ENCODE measurements at regions of chr2 and their contacts with region 1.

Region 1: GRCh38 chr2:206989306-206989705 is 50.0 kb downstream of the CPO start:
- DNase-seq: peak; percentile 58
- CTCF ChIP-seq: peak; percentile 68

Region 2: DNA sequence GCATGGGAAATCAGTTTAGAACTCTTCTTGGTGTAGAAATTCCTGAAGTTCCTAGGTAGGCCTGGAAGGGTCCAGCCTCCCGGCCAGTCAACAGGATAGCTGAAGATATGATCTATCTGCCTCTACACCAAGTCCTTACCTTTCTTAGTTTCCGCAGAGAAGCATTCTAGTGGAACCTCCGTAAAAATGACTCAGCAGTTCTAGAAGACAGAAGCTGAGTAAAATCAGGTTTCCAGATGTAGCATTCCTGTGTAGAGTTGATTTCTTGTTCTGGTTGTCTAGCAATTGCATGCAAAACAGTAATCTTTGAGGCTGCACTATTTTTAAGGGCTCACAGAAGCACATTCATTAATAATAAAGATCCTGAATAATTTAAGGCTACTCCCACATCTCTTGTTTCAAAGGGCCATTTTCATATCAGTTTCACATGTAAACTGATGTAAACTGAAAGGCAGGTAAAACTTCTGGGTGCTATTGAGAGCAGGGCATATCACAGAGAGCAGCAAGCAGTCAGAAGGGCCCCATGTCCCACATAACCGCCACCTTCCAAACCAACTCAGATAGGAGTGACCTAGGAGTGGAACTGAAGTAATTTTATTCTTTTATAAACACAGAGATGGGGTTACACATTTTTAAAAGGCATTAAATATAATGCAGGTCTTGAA is 267.9 kb before region 1 on chr2:
- CTCF ChIA-PET with region 1: no interaction called
- POLR2A ChIA-PET with region 1: no interaction called
- DNase-seq: peak; percentile 21
- CTCF ChIP-seq: no peak

Region 3: DNA sequence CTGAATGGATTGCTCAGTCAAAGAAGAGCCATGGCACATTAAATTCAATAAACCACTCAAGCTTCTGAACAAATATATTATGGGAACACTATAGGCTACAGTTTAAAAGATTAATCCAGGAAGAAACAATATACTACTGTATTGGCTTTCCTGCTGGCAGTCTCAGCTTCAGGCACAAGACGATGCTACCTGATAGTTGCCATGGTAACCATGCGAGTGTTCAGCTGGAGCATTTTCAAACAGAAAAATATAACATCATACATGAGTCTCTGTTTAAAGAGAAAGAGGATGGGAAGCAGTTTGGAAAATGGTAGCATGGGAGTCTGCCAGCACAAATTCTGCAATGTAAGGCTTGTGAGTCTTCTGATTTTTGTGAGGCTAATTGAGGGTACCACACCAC is 115.9 kb before region 1 on chr2:
- CTCF ChIA-PET with region 1: no interaction called
- POLR2A ChIA-PET with region 1: no interaction called
- DNase-seq: no peak
- CTCF ChIP-seq: no peak

Region 4: DNA sequence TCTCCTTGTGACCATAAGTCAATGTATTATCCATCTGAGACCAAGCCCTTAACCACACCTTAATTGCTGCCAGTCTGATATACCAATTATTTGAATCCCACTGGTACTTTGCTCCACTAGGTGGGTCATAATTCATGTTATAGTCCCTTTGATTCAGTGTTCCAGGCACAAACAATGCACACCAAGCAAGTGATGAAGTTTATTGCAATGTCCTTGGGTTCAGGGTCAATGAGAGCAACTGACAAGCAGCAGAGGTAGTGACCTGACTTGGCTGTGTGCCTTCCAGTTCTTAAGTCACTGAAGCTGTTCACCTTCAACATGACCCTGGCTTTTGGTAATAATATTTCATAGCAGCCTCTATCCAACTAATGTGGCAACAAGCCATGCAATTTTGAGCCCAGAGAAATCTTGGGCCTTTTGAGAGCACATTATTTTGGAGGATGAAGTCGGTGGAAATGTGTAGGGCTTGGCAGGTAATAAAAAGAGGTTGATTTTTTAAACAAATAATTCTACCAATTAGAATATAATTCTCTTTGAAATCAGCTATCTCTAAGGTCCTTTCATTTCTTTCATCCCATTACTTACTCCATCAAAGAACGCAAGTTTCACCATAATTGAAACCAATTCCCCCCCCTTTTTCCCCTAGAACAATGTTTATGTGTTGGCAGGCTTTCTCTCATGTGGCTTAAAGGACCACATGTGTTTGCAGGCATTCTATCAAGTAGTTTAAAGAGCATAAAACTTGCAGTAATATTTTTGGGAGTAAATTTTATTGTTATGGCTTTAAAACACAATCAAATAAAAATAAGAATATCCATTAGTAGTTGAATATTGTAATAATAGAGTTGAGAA is 53.1 kb before region 1 on chr2:
- CTCF ChIA-PET with region 1: no interaction called
- POLR2A ChIA-PET with region 1: no interaction called
- DNase-seq: no peak
- CTCF ChIP-seq: no peak

Region 5: GRCh38 chr2:207012463-207012862 is 23.2 kb after region 1 on chr2:
- CTCF ChIA-PET with region 1: interaction called, 10 read pairs
- POLR2A ChIA-PET with region 1: no interaction called
- DNase-seq: no peak
- CTCF ChIP-seq: no peak

Measured in GM10248 (cell line).